IMR-90 (cell line): ENCODE measurements at regions of chr7 and their contacts with region 1.

Region 1: GRCh38 chr7:82572195-82572880 is 128.8 kb upstream of the CACNA2D1 start:
- DNase-seq: peak; percentile 85
- ATAC-seq: peak; percentile 97
- H3K4me3 ChIP-seq: no peak overlapping the region
- H3K27ac ChIP-seq: no peak overlapping the region
- H3K4me1 ChIP-seq: no peaks in the 10 kb centered on the region
- H3K27me3 ChIP-seq: no peaks in the 10 kb centered on the region; the same call in 1 of the 2 replicates
- CTCF ChIP-seq: peak; percentile 96
- POLR2A ChIP-seq: peak; percentile 48; the same call in 1 of the 2 replicates
- RAD21 ChIP-seq: peak; percentile 96

Region 2: DNA sequence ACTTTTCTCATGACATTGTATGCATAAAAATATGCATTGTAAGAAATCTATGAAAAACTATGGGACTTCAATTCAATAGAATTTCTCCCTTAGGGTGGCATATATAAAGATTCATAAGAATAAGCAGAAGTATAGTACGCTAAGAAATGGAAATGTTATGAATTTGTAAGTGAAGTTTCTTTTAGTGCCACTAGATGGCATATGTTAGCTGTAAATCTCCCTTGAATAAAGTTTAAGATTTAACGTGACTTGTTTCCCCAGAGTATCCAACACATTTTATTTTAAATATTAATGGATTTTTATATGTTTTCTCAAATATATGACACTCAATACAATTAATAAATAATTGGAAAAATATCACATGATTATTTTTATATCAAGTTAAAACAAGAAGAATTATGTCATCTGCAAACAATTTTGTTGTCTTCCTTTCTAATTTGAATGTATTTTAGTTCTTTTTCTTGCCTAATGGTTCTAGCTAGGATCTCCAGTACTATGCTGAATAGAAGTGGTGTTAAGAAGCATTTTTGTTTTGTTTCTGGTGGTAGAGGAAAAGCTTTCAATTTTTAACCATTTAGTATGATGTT is 1089.6 kb before region 1 on chr7:
- CTCF ChIA-PET with region 1: no interaction called
- POLR2A ChIA-PET with region 1: no interaction called
- dilution Hi-C with region 1: no loop called
- in situ Hi-C with region 1: no loop called
- intact Hi-C with region 1: loop called (anchors 2 kb)
- DNase-seq: peak; percentile 65
- ATAC-seq: peak; percentile 50
- H3K4me3 ChIP-seq: no peak overlapping the region
- H3K27ac ChIP-seq: no peak overlapping the region
- H3K4me1 ChIP-seq: peaks cover 3% of the 10 kb centered on the region
- H3K27me3 ChIP-seq: no peaks in the 10 kb centered on the region
- CTCF ChIP-seq: peak; percentile 62
- POLR2A ChIP-seq: no peak
- RAD21 ChIP-seq: peak; percentile 67

Region 3: GRCh38 chr7:81937091-81937490 is 635.2 kb before region 1 on chr7:
- CTCF ChIA-PET with region 1: no interaction called
- POLR2A ChIA-PET with region 1: no interaction called
- dilution Hi-C with region 1: no loop called
- in situ Hi-C with region 1: no loop called
- intact Hi-C with region 1: no loop called
- DNase-seq: peak; percentile 8
- ATAC-seq: no peak
- H3K4me3 ChIP-seq: no peak overlapping the region
- H3K27ac ChIP-seq: no peak overlapping the region
- H3K4me1 ChIP-seq: no peaks in the 10 kb centered on the region
- H3K27me3 ChIP-seq: no peaks in the 10 kb centered on the region
- CTCF ChIP-seq: no peak
- POLR2A ChIP-seq: no peak
- RAD21 ChIP-seq: no peak

Region 4: GRCh38 chr7:82044497-82045080 is 527.7 kb before region 1 on chr7:
- CTCF ChIA-PET with region 1: no interaction called
- POLR2A ChIA-PET with region 1: no interaction called
- dilution Hi-C with region 1: no loop called
- in situ Hi-C with region 1: loop called (anchors 25 kb)
- intact Hi-C with region 1: loop called (anchors 1 kb)
- DNase-seq: peak; percentile 58
- ATAC-seq: peak; percentile 37; the same call in 1 of the 2 replicates
- H3K4me3 ChIP-seq: no peak overlapping the region
- H3K27ac ChIP-seq: no peak overlapping the region
- H3K4me1 ChIP-seq: peaks cover 3% of the 10 kb centered on the region
- H3K27me3 ChIP-seq: no peaks in the 10 kb centered on the region
- CTCF ChIP-seq: peak; percentile 78
- POLR2A ChIP-seq: no peak
- RAD21 ChIP-seq: peak; percentile 84

Region 5: DNA sequence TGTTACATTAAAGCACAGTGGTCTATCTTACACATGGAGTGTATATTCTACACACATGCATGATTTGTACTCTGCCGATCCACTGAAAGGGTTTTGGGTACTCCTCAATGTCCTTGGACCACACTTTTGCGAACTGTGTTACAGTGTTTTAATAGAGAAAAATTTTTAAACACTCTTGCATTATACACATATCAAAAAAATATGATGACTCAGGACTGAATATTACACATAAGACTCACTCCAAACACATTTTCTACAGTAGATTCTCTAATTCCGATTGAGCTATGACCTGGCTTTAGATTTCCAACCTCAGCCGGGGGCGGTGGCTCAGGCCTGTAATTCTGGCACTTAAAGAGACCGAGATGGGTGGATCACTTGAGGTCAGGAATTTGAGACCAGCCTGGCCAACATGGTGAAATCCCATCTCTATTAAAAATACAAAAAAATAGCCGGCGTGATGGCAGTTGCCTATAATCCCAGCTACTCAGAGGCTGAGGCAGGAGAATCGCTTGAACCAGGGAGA is 351.1 kb before region 1 on chr7:
- CTCF ChIA-PET with region 1: no interaction called
- POLR2A ChIA-PET with region 1: no interaction called
- dilution Hi-C with region 1: no loop called
- in situ Hi-C with region 1: loop called (anchors 10 kb)
- intact Hi-C with region 1: no loop called
- DNase-seq: peak; percentile 35
- ATAC-seq: peak; percentile 24; the same call in 1 of the 2 replicates
- H3K4me3 ChIP-seq: no peak overlapping the region
- H3K27ac ChIP-seq: no peak overlapping the region
- H3K4me1 ChIP-seq: no peaks in the 10 kb centered on the region
- H3K27me3 ChIP-seq: no peaks in the 10 kb centered on the region
- CTCF ChIP-seq: no peak
- POLR2A ChIP-seq: no peak
- RAD21 ChIP-seq: no peak

Region 6: GRCh38 chr7:82234457-82235049 is 337.8 kb before region 1 on chr7:
- CTCF ChIA-PET with region 1: interaction called, 3 read pairs
- POLR2A ChIA-PET with region 1: no interaction called
- dilution Hi-C with region 1: no loop called
- in situ Hi-C with region 1: loop called (anchors 10 kb)
- intact Hi-C with region 1: loop called (anchors 1 kb)
- DNase-seq: peak; percentile 59
- ATAC-seq: no peak; the same call in 1 of the 2 replicates
- H3K4me3 ChIP-seq: no peak overlapping the region
- H3K27ac ChIP-seq: no peak overlapping the region
- H3K4me1 ChIP-seq: 0 out of 2 replicates have a peak, but pooled peaks cover 1% of the 10 kb centered on the region
- H3K27me3 ChIP-seq: no peaks in the 10 kb centered on the region
- CTCF ChIP-seq: peak; percentile 75
- POLR2A ChIP-seq: no peak
- RAD21 ChIP-seq: peak; percentile 75

Region 7: GRCh38 chr7:82443547-82444219 is 128.7 kb before region 1 on chr7 and contains the start of gene CACNA2D1:
- CTCF ChIA-PET with region 1: no interaction called
- POLR2A ChIA-PET with region 1: no interaction called
- dilution Hi-C with region 1: no loop called
- in situ Hi-C with region 1: no loop called
- intact Hi-C with region 1: loop called (anchors 2 kb)
- DNase-seq: peak; percentile 91
- ATAC-seq: peak; percentile 91
- H3K4me3 ChIP-seq: peak within 1 kb of the TSS; percentile 96
- H3K27ac ChIP-seq: peak within 1 kb of the TSS; percentile 98
- H3K4me1 ChIP-seq: peaks cover 2% of the 10 kb centered on the region
- H3K27me3 ChIP-seq: no peaks in the 10 kb centered on the region
- CTCF ChIP-seq: peak; percentile 37
- POLR2A ChIP-seq: peak; percentile 53; the same call in 1 of the 2 replicates
- RAD21 ChIP-seq: peak; percentile 39; the same call in 1 of the 2 replicates
- total RNA-seq, gene CACNA2D1: 21.9 and 32.2 TPM in 2 replicates

Region 8: DNA sequence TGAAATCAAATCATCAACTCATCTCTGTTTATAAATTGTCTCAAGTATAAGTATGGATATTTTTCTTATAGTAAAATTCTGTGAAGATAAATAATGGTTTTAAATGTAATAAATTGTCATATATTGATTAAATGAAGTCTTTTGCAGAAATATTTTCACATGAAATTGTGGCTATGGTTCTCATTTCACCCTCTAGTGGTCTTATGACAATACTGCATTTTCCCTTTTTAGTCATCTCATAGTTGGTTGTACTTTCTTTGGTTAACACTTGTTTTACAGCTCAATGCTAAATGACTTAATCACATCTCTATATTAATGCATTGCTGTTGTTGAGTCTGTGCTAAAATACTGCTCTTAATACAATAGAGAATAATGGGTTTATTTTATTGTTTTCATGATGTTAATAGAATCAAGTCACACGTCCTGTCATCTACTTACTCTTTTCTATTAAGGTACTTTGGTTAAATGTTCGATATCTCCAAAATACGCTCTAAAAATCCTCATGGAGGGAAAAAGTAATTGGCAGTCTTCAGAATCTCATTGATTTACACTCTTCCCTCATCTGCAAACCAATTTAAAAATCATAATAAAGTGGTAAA is 90.7 kb before region 1 on chr7:
- CTCF ChIA-PET with region 1: no interaction called
- POLR2A ChIA-PET with region 1: no interaction called
- dilution Hi-C with region 1: no loop called
- in situ Hi-C with region 1: no loop called
- intact Hi-C with region 1: loop called (anchors 2 kb)
- DNase-seq: peak; percentile 43
- ATAC-seq: 0 out of 2 replicates have a peak, but pooled peaks have one; percentile 40
- H3K4me3 ChIP-seq: no peak overlapping the region
- H3K27ac ChIP-seq: no peak overlapping the region
- H3K4me1 ChIP-seq: no peaks in the 10 kb centered on the region
- H3K27me3 ChIP-seq: no peaks in the 10 kb centered on the region
- CTCF ChIP-seq: peak; percentile 79
- POLR2A ChIP-seq: no peak
- RAD21 ChIP-seq: peak; percentile 74